Testis (tissue), 5 donors: ENCODE measurements at regions of chr19 and their contacts with region 1.

Region 1: DNA sequence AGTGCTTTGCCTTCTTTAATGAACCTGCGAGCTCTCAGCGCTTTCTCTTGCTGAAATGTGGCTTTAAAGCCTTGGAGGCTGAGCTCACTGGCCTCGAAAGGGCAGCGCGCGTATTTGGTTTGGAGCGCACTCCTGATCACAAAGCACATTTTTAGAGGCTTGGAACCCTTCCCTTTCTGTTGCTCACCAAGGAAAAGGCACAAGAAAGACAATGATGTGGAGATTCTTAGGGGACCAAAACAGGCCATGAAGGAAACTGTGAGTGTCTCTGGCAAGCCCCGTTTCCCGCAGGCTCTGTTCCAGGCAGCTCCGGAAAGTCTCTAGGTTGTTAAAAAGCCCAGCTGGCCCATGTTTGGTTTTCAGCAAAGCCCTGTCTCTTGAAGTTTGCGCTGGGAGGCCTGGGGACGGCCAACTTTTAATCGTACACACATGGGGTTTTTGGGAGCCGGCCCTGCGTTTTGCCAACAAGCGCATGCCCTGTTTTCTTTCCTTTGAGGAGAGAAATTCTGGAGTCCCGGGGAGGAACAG is 9.4 kb upstream of the SPC24 start:
- DNase-seq: peak; percentile 79
- H3K4me3 ChIP-seq: no peak overlapping the region
- H3K27ac ChIP-seq: peak overlapping the region; percentile 75 to 88
- H3K4me1 ChIP-seq: peaks cover 28% of the 10 kb centered on the region
- H3K27me3 ChIP-seq: no peaks in the 10 kb centered on the region
- CTCF ChIP-seq: no peak
- POLR2A ChIP-seq: no peak

Region 2: DNA sequence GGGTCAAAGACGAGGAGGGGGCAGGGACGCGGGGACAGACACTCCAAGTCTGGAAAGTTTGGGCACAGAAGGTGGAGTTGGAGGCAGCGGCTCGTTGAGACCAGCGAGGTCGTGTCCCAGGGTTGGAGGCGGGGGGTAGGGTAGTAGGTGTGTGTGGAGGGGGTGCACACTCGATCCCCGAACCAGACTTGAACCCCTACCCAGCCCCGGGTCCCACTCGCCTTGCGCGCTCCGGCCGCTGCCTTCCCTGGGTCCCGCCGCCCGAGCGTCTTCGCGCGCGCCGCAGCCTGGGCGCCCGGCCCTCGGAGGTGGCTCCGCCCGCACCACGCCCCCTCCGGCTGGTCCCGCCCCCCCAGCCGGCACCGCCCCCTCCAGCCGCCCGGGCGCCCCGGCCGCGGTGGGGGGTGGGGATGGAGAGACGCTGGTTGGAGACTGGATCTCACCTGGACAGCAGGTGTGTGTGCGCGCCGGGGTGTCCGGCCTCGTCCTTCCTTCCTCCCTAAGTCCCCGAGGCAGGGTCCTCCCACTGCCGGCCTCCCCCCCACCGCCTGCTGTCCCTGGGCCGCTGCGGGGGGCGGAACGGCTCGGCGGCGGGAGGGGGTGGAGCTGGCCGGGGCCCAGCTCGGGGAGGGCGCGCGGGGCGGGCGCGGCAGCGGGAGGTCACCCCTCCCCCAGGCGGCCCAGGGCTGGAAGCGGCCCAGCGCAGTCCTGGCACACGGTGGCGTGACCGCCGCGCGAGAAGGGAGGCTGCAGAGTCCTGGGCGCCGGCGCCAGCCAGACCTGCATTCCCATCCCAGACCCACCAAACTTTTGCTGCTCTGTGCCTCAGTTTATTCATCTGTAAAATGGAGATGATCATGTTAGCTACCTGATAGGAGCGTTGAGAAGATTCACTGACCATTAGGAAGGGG is 32.6 kb after region 1 on chr19 and contains the start of gene KANK2:
- intact Hi-C with region 1: loop called (anchors 2 kb)
- DNase-seq: peak; percentile 81
- H3K4me3 ChIP-seq: peak within 1 kb of the TSS; percentile 69 to 79
- H3K27ac ChIP-seq: peak within 1 kb of the TSS; percentile 87 to 95
- H3K4me1 ChIP-seq: peaks cover 15% of the 10 kb centered on the region
- H3K27me3 ChIP-seq: no peaks in the 10 kb centered on the region
- CTCF ChIP-seq: no peak
- POLR2A ChIP-seq: peak; percentile 55
- total RNA-seq, gene KANK2: 98.9 to 161 TPM

Region 3: GRCh38 chr19:11513946-11514345 is 349.0 kb after region 1 on chr19:
- intact Hi-C with region 1: no loop called
- DNase-seq: no peak
- H3K4me3 ChIP-seq: no peak overlapping the region
- H3K27ac ChIP-seq: no peak overlapping the region
- H3K4me1 ChIP-seq: no peaks in the 10 kb centered on the region
- H3K27me3 ChIP-seq: no peaks in the 10 kb centered on the region
- CTCF ChIP-seq: no peak
- POLR2A ChIP-seq: no peak